Ovary (tissue), 10 donors: ENCODE measurements at regions of chr11 and their contacts with region 1.

Region 1: DNA sequence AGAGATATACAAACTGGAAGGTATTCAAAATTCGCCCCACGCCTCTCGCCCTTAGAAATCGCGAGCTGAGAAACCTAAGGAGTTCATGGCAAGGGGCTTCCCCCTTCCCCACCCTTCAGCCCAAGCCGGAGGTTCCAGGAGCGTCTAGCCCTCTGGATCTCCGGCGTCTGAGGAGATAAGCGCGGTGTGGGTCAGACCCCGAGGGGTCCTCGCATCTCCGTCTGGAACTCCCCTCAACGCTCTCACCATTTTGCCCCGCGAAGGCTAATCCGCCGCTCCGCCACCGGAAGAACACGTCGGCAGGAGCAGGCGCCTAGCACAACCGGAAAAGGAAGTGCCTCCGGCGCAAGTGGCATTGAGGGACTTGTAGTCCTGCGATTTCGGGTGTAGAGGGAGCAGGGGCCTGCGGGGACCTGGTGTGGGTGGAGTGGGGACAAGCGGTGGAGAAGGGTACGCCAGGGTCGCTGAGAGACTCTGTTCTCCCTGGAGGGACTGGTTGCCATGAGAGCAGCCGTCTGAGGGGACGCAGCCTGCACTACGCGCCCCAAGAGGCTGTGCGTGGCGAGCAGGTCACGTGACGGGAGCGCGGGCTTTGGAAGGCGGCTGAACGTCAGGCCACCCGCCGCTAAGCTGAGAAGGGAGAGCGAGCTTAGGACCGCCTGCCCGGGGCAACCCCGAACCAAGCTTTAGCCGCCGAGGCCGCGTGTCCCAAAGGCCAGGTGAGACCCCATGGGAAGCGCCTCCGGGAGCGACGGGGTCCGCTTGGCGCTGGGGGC is at the starts of genes FEN1 and TMEM258:
- DNase-seq: peak; percentile 85 to 91 (median 87)
- H3K4me3 ChIP-seq: peak within 1 kb of the TSS; percentile 65
- H3K27ac ChIP-seq: peak within 1 kb of the TSS; percentile 85 to 90
- H3K4me1 ChIP-seq: peaks cover 5% of the 10 kb centered on the region
- H3K27me3 ChIP-seq: no peaks in the 10 kb centered on the region
- CTCF ChIP-seq: peak in 2 of 3 donors; percentile 31 to 56
- EP300 ChIP-seq: no peak
- POLR2A ChIP-seq: peak; percentile 85
- total RNA-seq, gene FEN1: 3.7 to 8.6 (median 5.2) TPM
- total RNA-seq, gene TMEM258: 32.2 to 131 (median 117) TPM

Region 2: GRCh38 chr11:61752117-61752924 is 40.2 kb before region 1 on chr11 and contains the start of gene MYRF:
- intact Hi-C with region 1: loop called in 1 of 4 experiments (anchors 1 kb)
- DNase-seq: peak; percentile 59 to 84 (median 62)
- H3K4me3 ChIP-seq: peak within 1 kb of the TSS; percentile 75
- H3K27ac ChIP-seq: peak within 1 kb of the TSS; percentile 19 to 73
- H3K4me1 ChIP-seq: peaks cover 12% of the 10 kb centered on the region
- H3K27me3 ChIP-seq: no peaks in the 10 kb centered on the region
- CTCF ChIP-seq: peak; percentile 9 to 77 (median 72)
- EP300 ChIP-seq: no peak
- POLR2A ChIP-seq: no peak
- total RNA-seq, gene MYRF: 11.3 to 109 (median 41.3) TPM

Region 3: GRCh38 chr11:61891331-61892084 is 99.0 kb after region 1 on chr11 and contains the start of gene FADS3:
- intact Hi-C with region 1: loop called in 1 of 4 experiments (anchors 5 kb)
- DNase-seq: peak; percentile 84 to 88 (median 87)
- H3K4me3 ChIP-seq: peak within 1 kb of the TSS; percentile 75
- H3K27ac ChIP-seq: peak within 1 kb of the TSS; percentile 83
- H3K4me1 ChIP-seq: peaks cover 5% of the 10 kb centered on the region
- H3K27me3 ChIP-seq: no peaks in the 10 kb centered on the region
- CTCF ChIP-seq: no peak
- EP300 ChIP-seq: no peak
- POLR2A ChIP-seq: peak; percentile 36
- total RNA-seq, gene FADS3: 21.9 to 85.8 (median 41.3) TPM

Region 4: GRCh38 chr11:61947486-61948210 is 155.2 kb after region 1 on chr11:
- intact Hi-C with region 1: loop called in 1 of 4 experiments (anchors 5 kb)
- DNase-seq: peak; percentile 93 to 95 (median 93)
- H3K4me3 ChIP-seq: no peak overlapping the region
- H3K27ac ChIP-seq: peak overlapping the region in 1 of 2 donors; percentile 1
- H3K4me1 ChIP-seq: peaks cover 12% of the 10 kb centered on the region
- H3K27me3 ChIP-seq: no peaks in the 10 kb centered on the region
- CTCF ChIP-seq: peak; percentile 93 to 98 (median 97)
- EP300 ChIP-seq: no peak
- POLR2A ChIP-seq: peak; percentile 36

Region 5: DNA sequence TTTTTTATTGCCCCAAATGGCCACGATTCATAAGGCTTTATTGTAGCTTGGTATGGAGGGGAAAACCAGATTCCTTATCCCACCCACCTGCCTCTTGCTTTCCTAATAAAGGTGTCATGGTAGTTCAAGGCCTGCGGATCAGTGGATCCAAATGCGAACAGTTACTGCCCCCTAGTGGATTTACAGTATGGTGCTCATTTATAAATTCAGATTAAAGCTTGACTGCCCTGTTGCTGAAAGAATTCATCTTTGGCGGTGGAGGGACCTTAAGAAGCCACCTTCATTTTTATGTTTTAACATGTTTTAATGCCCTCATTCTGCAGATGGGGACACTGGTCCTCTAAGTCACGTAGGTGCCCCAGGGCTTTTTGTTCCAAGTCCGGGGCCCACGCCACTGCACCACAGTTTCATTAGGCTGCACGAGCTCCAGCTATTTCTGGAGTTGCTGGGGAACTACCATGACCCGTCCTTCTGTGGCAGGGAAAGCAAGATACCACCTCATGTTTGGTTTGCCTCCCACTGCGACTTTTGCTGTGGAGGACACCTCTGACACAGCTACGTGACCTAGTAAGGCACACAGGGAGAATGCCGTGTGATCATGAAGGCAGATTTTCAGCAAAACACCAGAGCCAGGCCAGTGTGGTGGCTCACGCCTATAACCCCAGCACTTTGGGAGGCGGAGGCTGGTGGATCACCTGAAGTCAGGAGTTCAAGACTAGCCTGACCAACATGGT is 315.7 kb after region 1 on chr11:
- intact Hi-C with region 1: loop called in 3 of 4 experiments (anchors 5 to 10 kb)
- DNase-seq: peak in 1 of 5 donors; percentile 47
- H3K4me3 ChIP-seq: no peak overlapping the region
- H3K27ac ChIP-seq: no peak overlapping the region
- H3K4me1 ChIP-seq: peaks cover 10% of the 10 kb centered on the region
- H3K27me3 ChIP-seq: no peaks in the 10 kb centered on the region
- CTCF ChIP-seq: peak; percentile 80 to 86 (median 85)
- EP300 ChIP-seq: no peak
- POLR2A ChIP-seq: no peak

Region 6: DNA sequence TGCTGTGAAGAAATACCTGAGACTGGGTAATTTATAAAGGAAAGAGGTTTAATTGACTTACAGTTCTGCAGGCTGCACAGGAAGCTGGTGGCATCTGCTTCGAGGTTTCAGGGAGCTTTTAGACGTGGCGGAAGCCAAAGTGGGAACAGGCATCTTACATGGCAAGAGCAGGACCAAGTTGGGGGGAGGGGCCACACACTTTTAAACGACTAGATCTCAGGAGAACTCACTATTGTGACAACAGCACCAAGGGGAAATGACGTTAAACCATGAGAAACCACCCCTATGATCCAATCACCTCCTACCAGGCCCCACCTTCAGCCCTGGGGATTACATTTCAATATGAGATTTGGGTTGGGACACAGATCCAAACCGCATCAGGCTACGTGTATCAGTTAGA is 517.5 kb after region 1 on chr11:
- intact Hi-C with region 1: loop called in 1 of 4 experiments (anchors 5 kb)
- DNase-seq: no peak
- H3K4me3 ChIP-seq: no peak overlapping the region
- H3K27ac ChIP-seq: no peak overlapping the region
- H3K4me1 ChIP-seq: no peaks in the 10 kb centered on the region
- H3K27me3 ChIP-seq: no peaks in the 10 kb centered on the region
- CTCF ChIP-seq: no peak
- EP300 ChIP-seq: no peak
- POLR2A ChIP-seq: no peak